ENCODE measurements at regions of chr16 and their contacts with region 1.

Region 1: GRCh38 chr16:69105489-69106361 is at the start of gene HAS3:
- DNase-seq: peak; percentile 75
- ATAC-seq: peak; percentile 67
- H3K4me3 ChIP-seq: peak within 1 kb of the TSS; percentile 98
- H3K27ac ChIP-seq: peak within 1 kb of the TSS; percentile 83
- H3K4me1 ChIP-seq: peaks cover 33% of the 10 kb centered on the region
- H3K27me3 ChIP-seq: no peaks in the 10 kb centered on the region
- CTCF ChIP-seq: peak; percentile 62
- total RNA-seq, gene HAS3: 92.5 and 153 TPM in 2 replicates

Region 2: GRCh38 chr16:68575082-68575481 is 530.6 kb before region 1 on chr16:
- CTCF ChIA-PET with region 1: no interaction called
- POLR2A ChIA-PET with region 1: no interaction called
- intact Hi-C with region 1: no loop called
- DNase-seq: no peak
- ATAC-seq: no peak
- H3K4me3 ChIP-seq: no peak overlapping the region
- H3K27ac ChIP-seq: no peak overlapping the region
- H3K4me1 ChIP-seq: no peaks in the 10 kb centered on the region
- H3K27me3 ChIP-seq: no peaks in the 10 kb centered on the region
- CTCF ChIP-seq: no peak

Region 3: GRCh38 chr16:68843482-68844210 is 262.1 kb before region 1 on chr16 and contains the start of gene TANGO6:
- CTCF ChIA-PET with region 1: no interaction called
- POLR2A ChIA-PET with region 1: no interaction called
- intact Hi-C with region 1: loop called (anchors 1 kb)
- DNase-seq: peak; percentile 79
- ATAC-seq: peak; percentile 83
- H3K4me3 ChIP-seq: peak within 1 kb of the TSS; percentile 89
- H3K27ac ChIP-seq: peak within 1 kb of the TSS; percentile 14; the same call in 1 of the 2 replicates
- H3K4me1 ChIP-seq: peaks cover 6% of the 10 kb centered on the region
- H3K27me3 ChIP-seq: no peaks in the 10 kb centered on the region
- CTCF ChIP-seq: peak; percentile 35; the same call in 1 of the 2 replicates
- total RNA-seq, gene TANGO6: 9.4 and 17.7 TPM in 2 replicates

Measured in PC-3 (cell line).